Calu3 (cell line): ENCODE measurements at regions of chr4 and their contacts with region 1.

Region 1: GRCh38 chr4:127533028-127533700 is 99.6 kb upstream of the INTU start:
- DNase-seq: no peak
- H3K4me3 Mint-ChIP-seq: no peak overlapping the region
- H3K27ac Mint-ChIP-seq: no peak overlapping the region
- H3K4me1 Mint-ChIP-seq: no peaks in the 10 kb centered on the region
- H3K27me3 Mint-ChIP-seq: no peaks in the 10 kb centered on the region
- CTCF ChIP-seq: no peak

Region 2: GRCh38 chr4:127188856-127189255 is 344.3 kb before region 1 on chr4:
- CTCF ChIA-PET with region 1: no interaction called
- intact Hi-C with region 1: loop called (anchors 10 kb)
- DNase-seq: no peak
- H3K4me3 Mint-ChIP-seq: no peak overlapping the region
- H3K27ac Mint-ChIP-seq: no peak overlapping the region
- H3K4me1 Mint-ChIP-seq: no peaks in the 10 kb centered on the region
- H3K27me3 Mint-ChIP-seq: no peaks in the 10 kb centered on the region
- CTCF ChIP-seq: no peak

Region 3: DNA sequence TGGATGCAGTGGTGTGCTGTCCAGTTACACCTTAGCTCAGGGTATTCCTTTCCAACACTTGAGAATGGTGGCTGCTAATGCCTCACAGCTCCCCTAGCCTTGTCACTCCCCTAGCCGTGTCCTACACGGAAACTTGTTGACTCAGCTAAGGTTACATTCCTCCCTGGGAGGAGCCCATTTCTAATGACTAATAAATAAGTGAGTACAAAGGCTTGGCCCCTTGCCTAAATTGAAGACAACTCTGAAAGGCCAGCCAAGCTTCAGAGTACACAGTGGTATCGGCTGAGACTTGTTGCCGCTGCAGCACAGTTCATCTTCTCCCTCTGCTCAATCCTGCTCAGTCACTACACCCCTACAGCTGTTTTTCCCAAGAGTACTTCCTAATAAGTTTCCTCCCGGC is 175.8 kb after region 1 on chr4:
- CTCF ChIA-PET with region 1: no interaction called
- intact Hi-C with region 1: no loop called
- DNase-seq: peak; percentile 55
- H3K4me3 Mint-ChIP-seq: no peak overlapping the region
- H3K27ac Mint-ChIP-seq: no peak overlapping the region
- H3K4me1 Mint-ChIP-seq: no peaks in the 10 kb centered on the region
- H3K27me3 Mint-ChIP-seq: no peaks in the 10 kb centered on the region
- CTCF ChIP-seq: no peak